Tibial artery (tissue), 4 donors: ENCODE measurements at regions of chr14 and their contacts with region 1.

Region 1: DNA sequence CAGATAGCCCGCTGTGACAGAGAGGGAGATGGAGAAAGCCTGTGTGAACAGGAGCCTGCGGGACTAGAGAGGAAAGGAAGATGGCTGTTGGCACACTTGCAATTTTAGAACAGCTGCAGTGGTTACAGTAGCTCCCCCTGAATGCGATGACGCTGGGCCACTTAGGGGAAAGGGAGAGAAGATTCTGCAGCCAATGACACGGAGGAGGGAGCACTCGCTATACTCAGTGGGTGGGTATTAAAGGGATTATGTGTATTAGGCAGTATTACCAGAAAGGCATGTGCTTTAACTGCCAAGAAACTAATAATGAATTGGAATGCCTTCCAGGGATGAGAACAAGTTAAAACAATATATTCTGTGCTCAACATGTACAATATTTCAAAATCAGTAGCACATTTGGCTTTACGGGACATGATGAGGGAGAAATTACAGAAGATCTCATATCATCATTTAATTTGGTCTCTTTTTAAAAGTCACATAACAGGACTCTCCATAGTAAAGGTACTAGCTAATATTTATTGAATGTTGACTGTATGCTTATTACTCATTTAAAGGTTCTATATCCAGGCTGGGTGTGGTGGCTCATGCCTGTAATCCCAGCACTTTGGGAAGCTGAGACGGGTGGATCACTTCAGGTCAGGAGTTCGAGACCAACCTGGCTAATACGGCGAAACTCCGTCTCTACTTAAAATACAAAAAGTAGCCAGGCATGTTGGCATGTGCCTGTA is 35.9 kb upstream of the FOS start:
- DNase-seq: peak in 1 of 2 donors; percentile 39
- H3K4me3 ChIP-seq: no peak overlapping the region
- H3K27ac ChIP-seq: no peak overlapping the region
- H3K4me1 ChIP-seq: peaks cover 0 to 37% (median 18%) of the 10 kb centered on the region in 4 donors
- H3K27me3 ChIP-seq: no peaks in the 10 kb centered on the region
- CTCF ChIP-seq: no peak

Region 2: GRCh38 chr14:74495356-74495755 is 747.4 kb before region 1 on chr14:
- intact Hi-C with region 1: loop called (anchors 5 kb)
- DNase-seq: no peak
- H3K4me3 ChIP-seq: no peak overlapping the region
- H3K27ac ChIP-seq: peak overlapping the region in 1 of 2 donors; percentile 96
- H3K4me1 ChIP-seq: peaks cover 0 to 32% (median 14%) of the 10 kb centered on the region in 4 donors
- H3K27me3 ChIP-seq: no peaks in the 10 kb centered on the region
- CTCF ChIP-seq: no peak